Ovary (tissue), 10 donors: ENCODE measurements at regions of chr12 and their contacts with region 1.

Region 1: DNA sequence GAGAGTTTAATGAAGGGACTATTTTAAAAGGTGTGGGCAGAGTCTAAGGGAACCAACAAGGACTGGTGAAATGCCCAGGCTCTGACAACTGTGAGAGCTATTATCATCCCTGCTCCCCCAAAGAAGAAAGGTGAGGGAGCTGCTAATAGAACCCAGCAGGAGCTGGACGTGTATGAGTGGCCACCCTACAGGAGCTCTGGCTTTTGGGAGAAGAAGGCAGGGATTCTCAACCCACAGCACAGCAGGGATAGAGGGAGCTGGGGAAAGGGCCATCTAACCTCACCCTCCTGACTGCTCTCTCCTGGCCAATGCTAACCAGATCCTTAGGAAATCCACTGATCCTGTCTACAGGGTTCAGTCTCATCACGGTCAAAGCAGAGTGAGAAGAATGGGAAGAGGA is 57.1 kb downstream of the GRIN2B start:
- DNase-seq: no peak
- H3K4me3 ChIP-seq: no peak overlapping the region
- H3K27ac ChIP-seq: no peak overlapping the region
- H3K4me1 ChIP-seq: no peaks in the 10 kb centered on the region
- H3K27me3 ChIP-seq: no peaks in the 10 kb centered on the region
- CTCF ChIP-seq: no peak
- EP300 ChIP-seq: no peak
- POLR2A ChIP-seq: no peak

Region 2: GRCh38 chr12:13947276-13947946 is 23.1 kb after region 1 on chr12:
- intact Hi-C with region 1: no loop called
- DNase-seq: no peak
- H3K4me3 ChIP-seq: no peak overlapping the region
- H3K27ac ChIP-seq: no peak overlapping the region
- H3K4me1 ChIP-seq: no peaks in the 10 kb centered on the region
- H3K27me3 ChIP-seq: no peaks in the 10 kb centered on the region
- CTCF ChIP-seq: no peak
- EP300 ChIP-seq: no peak
- POLR2A ChIP-seq: no peak

Region 3: GRCh38 chr12:13970803-13971202 is 46.5 kb after region 1 on chr12:
- intact Hi-C with region 1: loop called in 1 of 4 experiments (anchors 1 kb)
- DNase-seq: no peak
- H3K4me3 ChIP-seq: no peak overlapping the region
- H3K27ac ChIP-seq: no peak overlapping the region
- H3K4me1 ChIP-seq: no peaks in the 10 kb centered on the region
- H3K27me3 ChIP-seq: no peaks in the 10 kb centered on the region
- CTCF ChIP-seq: no peak
- EP300 ChIP-seq: no peak
- POLR2A ChIP-seq: no peak